MCF 10A (cell line): ENCODE measurements at regions of chr14 and their contacts with region 1.

Region 1: GRCh38 chr14:59333668-59334067 is 131.5 kb downstream of the GPR135 start:
- DNase-seq: peak; percentile 88
- H3K4me3 Mint-ChIP-seq: no peak overlapping the region
- H3K27ac Mint-ChIP-seq: peak overlapping the region; percentile 82
- H3K4me1 Mint-ChIP-seq: peaks cover 46% of the 10 kb centered on the region
- H3K27me3 Mint-ChIP-seq: no peaks in the 10 kb centered on the region
- CTCF ChIP-seq: no peak

Region 2: GRCh38 chr14:59275653-59276052 is 58.0 kb before region 1 on chr14:
- CTCF ChIA-PET with region 1: interaction called, 5 read pairs
- POLR2A ChIA-PET with region 1: interaction called, 15 read pairs
- intact Hi-C with region 1: no loop called
- DNase-seq: peak; percentile 87
- H3K4me3 Mint-ChIP-seq: peak overlapping the region; percentile 33
- H3K27ac Mint-ChIP-seq: peak overlapping the region; percentile 81
- H3K4me1 Mint-ChIP-seq: peaks cover 39% of the 10 kb centered on the region
- H3K27me3 Mint-ChIP-seq: no peaks in the 10 kb centered on the region
- CTCF ChIP-seq: no peak

Region 3: DNA sequence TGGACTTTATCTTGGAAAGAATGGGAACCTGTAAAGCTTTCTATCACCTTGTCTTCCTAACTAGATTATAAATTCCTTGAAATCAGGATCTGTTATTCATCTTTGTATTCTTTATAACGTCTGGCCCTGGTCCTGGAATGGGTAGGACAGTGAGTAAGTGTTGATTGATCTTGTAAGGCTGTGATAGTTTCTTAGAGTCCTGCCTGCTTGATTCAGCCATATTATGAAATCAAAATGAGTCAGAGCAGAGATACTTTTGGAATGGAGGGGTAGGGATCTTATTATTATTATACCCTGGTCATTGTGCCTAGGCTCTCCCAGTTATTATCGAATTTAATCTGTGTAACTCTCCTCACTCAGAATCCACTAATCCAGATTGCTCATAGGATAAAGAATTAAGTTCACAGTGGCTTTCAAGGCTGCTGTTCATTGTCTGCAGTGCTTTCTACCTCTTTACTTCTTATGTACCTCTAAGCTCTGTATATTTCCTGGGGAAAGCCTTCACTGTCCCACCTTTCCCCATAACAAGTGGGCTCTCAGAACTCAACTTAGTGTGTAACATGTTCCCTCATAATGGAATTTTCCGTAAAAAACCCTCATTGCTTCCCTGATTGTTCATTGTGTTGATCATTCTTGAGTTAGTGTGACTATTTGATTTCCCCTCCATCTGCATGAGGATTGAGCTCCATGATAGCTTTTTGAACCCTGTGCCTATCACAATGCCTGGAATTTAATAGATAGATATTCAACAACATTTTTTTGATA is 51.9 kb before region 1 on chr14:
- CTCF ChIA-PET with region 1: no interaction called
- POLR2A ChIA-PET with region 1: interaction called, 9 read pairs
- intact Hi-C with region 1: loop called (anchors 1 kb)
- DNase-seq: peak; percentile 80
- H3K4me3 Mint-ChIP-seq: peak overlapping the region; percentile 43
- H3K27ac Mint-ChIP-seq: peak overlapping the region; percentile 61
- H3K4me1 Mint-ChIP-seq: peaks cover 46% of the 10 kb centered on the region
- H3K27me3 Mint-ChIP-seq: no peaks in the 10 kb centered on the region
- CTCF ChIP-seq: no peak